ENCODE measurements at regions of chr4 and their contacts with region 1.

Region 1: DNA sequence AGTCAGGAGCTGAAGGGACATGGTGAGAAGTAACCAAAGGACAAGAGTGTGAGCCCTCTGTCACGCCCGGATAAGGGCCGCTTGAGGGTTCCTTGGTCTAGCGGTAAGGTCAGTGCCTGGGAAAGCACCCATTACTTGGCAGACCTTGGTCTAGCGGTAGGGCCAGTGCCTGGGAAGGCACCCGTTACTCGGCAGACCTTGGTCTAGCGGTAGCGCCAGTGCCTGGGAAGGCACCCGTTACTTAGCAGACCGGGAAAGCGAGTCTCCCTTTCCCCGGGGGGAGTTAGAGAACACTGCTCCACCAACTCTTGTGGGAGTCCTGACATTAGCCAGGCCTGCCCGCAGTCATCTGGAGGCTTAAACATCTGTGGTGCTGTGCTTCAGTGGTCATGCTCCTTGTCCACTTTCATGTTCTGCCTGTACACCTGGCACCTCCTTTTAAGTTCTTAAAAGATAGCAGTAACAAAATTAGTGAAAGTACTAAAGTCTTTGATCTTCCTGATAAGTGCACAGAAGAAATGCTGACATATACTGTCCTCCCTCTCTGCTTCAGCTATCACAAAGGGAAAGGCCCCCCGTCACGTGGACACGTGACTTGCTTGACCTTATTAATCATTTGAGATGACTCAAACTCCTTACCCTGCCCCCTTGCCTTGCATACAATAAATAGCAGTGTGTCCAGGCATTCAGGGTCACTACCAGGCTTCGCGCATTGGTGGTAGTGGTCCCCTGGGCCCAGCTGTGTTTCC is 9.3 kb upstream of the SEC24B start:
- DNase-seq: no peak
- H3K4me3 ChIP-seq: no peak overlapping the region
- H3K27ac ChIP-seq: no peak overlapping the region
- H3K4me1 ChIP-seq: no peaks in the 10 kb centered on the region
- H3K27me3 ChIP-seq: no peaks in the 10 kb centered on the region
- CTCF ChIP-seq: no peak

Region 2: DNA sequence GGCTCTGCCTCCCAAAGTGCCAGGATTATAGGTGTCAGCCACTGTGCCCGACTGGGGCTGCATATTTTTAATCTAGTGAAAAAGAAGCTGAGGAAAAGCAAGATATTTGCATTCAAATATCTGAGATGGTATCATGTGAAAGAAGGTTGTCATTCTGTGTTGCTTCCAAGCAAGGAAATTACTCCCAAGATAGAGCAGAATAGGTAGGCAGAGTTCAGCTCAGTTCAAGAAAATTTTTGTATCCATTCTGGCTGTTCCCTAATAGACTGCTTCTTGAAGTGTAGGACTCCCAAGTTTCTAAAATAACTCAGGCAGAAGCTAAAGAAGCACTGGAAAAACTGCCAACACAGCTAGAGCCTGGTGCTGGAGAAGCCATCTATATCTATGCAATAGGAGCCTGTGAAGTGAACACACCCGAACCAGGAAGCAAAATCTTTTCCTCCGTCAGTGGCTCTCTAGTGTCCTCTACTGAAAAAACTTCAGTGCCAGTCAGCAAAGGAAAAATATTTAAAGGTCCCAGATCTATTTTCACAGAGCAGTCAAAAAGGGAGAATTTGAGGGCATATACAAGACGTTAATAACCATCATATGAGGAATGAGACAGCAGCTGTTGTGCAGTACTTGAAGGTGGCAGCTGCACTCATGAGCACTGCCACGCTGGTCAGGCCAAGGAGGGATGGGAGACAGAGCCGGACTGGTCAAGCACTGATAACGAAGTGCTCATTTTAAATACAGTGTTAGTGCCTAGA is 150.0 kb after region 1 on chr4:
- intact Hi-C with region 1: loop called (anchors 10 kb)
- DNase-seq: peak; percentile 28
- H3K4me3 ChIP-seq: no peak overlapping the region
- H3K27ac ChIP-seq: no peak overlapping the region
- H3K4me1 ChIP-seq: no peaks in the 10 kb centered on the region
- H3K27me3 ChIP-seq: no peaks in the 10 kb centered on the region
- CTCF ChIP-seq: peak; percentile 29

Region 3: DNA sequence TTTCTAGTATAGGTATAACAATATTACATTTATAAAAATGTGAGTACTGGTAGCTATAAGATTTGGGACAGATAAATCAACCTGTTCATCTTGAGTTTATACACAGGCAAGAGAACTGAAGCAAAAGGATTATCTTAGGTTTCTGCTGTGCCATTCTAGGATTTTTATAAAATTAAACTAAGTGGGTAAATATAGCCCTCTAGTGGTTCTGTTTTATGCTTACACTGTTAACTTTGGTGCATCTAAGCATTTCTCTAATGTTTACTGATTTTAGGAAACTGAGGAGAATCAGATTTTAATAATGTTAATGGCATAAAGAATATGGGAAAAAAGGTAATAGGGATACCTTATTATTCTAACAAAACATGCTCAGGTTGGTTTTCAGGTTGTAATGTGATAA is 402.5 kb after region 1 on chr4:
- intact Hi-C with region 1: loop called (anchors 5 kb)
- DNase-seq: no peak
- H3K4me3 ChIP-seq: no peak overlapping the region
- H3K27ac ChIP-seq: no peak overlapping the region
- H3K4me1 ChIP-seq: no peaks in the 10 kb centered on the region
- H3K27me3 ChIP-seq: no peaks in the 10 kb centered on the region
- CTCF ChIP-seq: peak; percentile 20

Region 4: GRCh38 chr4:109977854-109978501 is 553.7 kb after region 1 on chr4:
- intact Hi-C with region 1: loop called (anchors 5 kb)
- DNase-seq: no peak
- H3K4me3 ChIP-seq: no peak overlapping the region
- H3K27ac ChIP-seq: no peak overlapping the region
- H3K4me1 ChIP-seq: no peaks in the 10 kb centered on the region
- H3K27me3 ChIP-seq: no peaks in the 10 kb centered on the region
- CTCF ChIP-seq: peak; percentile 56

Region 5: GRCh38 chr4:110484740-110485139 is 1060.5 kb after region 1 on chr4:
- intact Hi-C with region 1: no loop called
- DNase-seq: no peak
- H3K4me3 ChIP-seq: no peak overlapping the region
- H3K27ac ChIP-seq: no peak overlapping the region
- H3K4me1 ChIP-seq: peaks cover 5% of the 10 kb centered on the region
- H3K27me3 ChIP-seq: no peaks in the 10 kb centered on the region
- CTCF ChIP-seq: no peak

Measured in colonic mucosa (tissue), 4 donors.